Naive thymus-derived CD4-positive, alpha-beta T cell (primary cell): ENCODE measurements at regions of chr2 and their contacts with region 1.

Region 1: DNA sequence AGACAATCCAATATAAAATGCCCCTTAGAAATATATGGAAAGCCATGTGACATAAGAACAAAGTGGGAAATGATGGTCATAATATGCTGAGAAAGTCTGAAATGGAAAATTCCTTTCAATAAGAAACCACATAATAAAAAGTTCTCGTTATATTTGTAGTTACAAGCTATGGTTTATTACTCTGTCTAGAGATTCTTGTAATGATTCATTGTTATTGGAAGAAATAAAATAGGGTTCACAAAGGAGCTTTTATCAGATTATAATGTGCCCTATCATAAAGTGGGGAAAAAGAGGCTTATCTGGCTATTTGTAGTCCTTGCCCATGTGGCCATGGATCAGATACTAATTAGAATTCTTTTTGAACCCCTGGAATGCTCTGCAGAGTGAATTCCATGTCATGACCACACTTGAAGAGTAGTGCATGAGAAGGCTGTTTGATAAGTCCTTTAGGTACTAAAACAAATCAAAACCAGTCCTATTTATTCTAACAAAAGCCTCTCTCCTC is 420.7 kb upstream of the NRP2 start:
- DNase-seq: no peak
- ATAC-seq: no peak
- H3K4me3 ChIP-seq: no peak overlapping the region
- H3K4me3 Mint-ChIP-seq: no peak overlapping the region
- H3K27ac ChIP-seq: no peak overlapping the region
- H3K27ac Mint-ChIP-seq: no peak overlapping the region
- H3K4me1 ChIP-seq: no peaks in the 10 kb centered on the region
- H3K4me1 Mint-ChIP-seq: peaks cover 0 to 2% (median 0%) of the 10 kb centered on the region in 7 donors
- H3K27me3 ChIP-seq: no peaks in the 10 kb centered on the region
- H3K27me3 Mint-ChIP-seq: peaks cover 0 to 34% (median 2%) of the 10 kb centered on the region in 5 donors

Region 2: DNA sequence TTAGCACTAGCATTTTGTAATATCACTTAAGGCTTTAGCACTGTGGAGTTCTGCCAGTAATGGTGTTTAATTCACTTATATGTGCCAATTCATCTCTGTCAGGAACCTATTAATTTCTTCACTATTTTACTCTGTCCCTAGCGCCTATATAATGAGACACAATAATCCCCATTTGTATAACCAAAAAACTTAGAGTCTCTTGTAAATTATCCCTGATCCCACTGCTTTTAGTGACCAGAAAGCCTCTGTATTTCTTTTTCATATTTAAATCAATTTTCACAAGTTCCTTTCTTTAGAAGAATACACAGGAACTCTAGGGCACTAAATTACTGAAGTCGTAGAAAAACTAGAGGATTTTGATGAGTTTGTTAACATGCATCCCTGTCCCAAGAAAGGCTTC is 178.1 kb after region 1 on chr2:
- CTCF ChIA-PET with region 1: no interaction called
- POLR2A ChIA-PET with region 1: no interaction called
- intact Hi-C with region 1: loop called in 1 of 2 experiments (anchors 10 kb)
- DNase-seq: no peak
- ATAC-seq: no peak
- H3K4me3 ChIP-seq: no peak overlapping the region
- H3K4me3 Mint-ChIP-seq: no peak overlapping the region
- H3K27ac ChIP-seq: no peak overlapping the region
- H3K27ac Mint-ChIP-seq: no peak overlapping the region
- H3K4me1 ChIP-seq: no peaks in the 10 kb centered on the region
- H3K4me1 Mint-ChIP-seq: peaks cover 0 to 6% (median 0%) of the 10 kb centered on the region in 7 donors
- H3K27me3 ChIP-seq: no peaks in the 10 kb centered on the region
- H3K27me3 Mint-ChIP-seq: peaks cover 0 to 4% (median 0%) of the 10 kb centered on the region in 5 donors